ENCODE measurements at regions of chr16 and their contacts with region 1.

Region 1: GRCh38 chr16:87713451-87714229 is 52.1 kb downstream of the KLHDC4 start:
- DNase-seq: peak; percentile 43 to 83 (median 59)
- ATAC-seq: peak; percentile 97
- H3K4me3 ChIP-seq: no peak overlapping the region
- H3K4me3 Mint-ChIP-seq: peak overlapping the region; percentile 59
- H3K27ac ChIP-seq: peak overlapping the region; percentile 3 to 56
- H3K27ac Mint-ChIP-seq: peak overlapping the region; percentile 83
- H3K4me1 ChIP-seq: peaks cover 36% of the 10 kb centered on the region
- H3K4me1 Mint-ChIP-seq: peaks cover 38% of the 10 kb centered on the region
- H3K27me3 ChIP-seq: no peaks in the 10 kb centered on the region
- H3K27me3 Mint-ChIP-seq: no peaks in the 10 kb centered on the region
- CTCF ChIP-seq: no peak

Region 2: GRCh38 chr16:86078121-86078600 is 1635.5 kb before region 1 on chr16:
- CTCF ChIA-PET with region 1: no interaction called
- POLR2A ChIA-PET with region 1: no interaction called
- intact Hi-C with region 1: no loop called
- DNase-seq: peak in 1 of 14 experiments; percentile 12
- ATAC-seq: no peak
- H3K4me3 ChIP-seq: no peak overlapping the region
- H3K4me3 Mint-ChIP-seq: no peak overlapping the region
- H3K27ac ChIP-seq: no peak overlapping the region
- H3K27ac Mint-ChIP-seq: no peak overlapping the region
- H3K4me1 ChIP-seq: no peaks in the 10 kb centered on the region
- H3K4me1 Mint-ChIP-seq: no peaks in the 10 kb centered on the region
- H3K27me3 ChIP-seq: peaks cover 0 to 7% of the 10 kb centered on the region in 2 experiments
- H3K27me3 Mint-ChIP-seq: peaks cover 12% of the 10 kb centered on the region
- CTCF ChIP-seq: no peak

Region 3: DNA sequence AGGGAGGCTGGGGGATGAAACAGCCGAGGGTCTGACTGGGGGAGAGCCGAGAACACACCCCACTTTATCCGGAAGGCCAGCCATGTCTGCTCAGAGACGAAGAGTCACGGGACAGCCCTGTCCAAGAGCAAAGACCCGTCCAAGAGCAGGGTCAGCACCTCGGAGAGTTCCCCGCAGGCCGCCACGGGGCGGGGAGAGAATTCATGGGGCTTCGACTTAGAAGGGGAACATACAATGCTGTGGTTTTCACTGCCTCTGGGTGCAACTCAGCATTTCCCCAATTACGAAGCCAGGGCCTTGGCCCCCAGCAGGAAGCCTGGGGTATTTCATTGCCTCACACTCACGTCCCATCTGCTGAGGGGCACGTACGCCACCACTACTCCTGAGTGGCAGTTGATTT is 52.1 kb before region 1 on chr16:
- CTCF ChIA-PET with region 1: no interaction called
- POLR2A ChIA-PET with region 1: no interaction called
- intact Hi-C with region 1: no loop called
- DNase-seq: peak in 6 of 14 experiments; percentile 4 to 41 (median 20)
- ATAC-seq: peak; percentile 26
- H3K4me3 ChIP-seq: no peak overlapping the region
- H3K4me3 Mint-ChIP-seq: no peak overlapping the region
- H3K27ac ChIP-seq: no peak overlapping the region
- H3K27ac Mint-ChIP-seq: no peak overlapping the region
- H3K4me1 ChIP-seq: no peaks in the 10 kb centered on the region
- H3K4me1 Mint-ChIP-seq: no peaks in the 10 kb centered on the region
- H3K27me3 ChIP-seq: no peaks in the 10 kb centered on the region
- H3K27me3 Mint-ChIP-seq: peaks cover 22% of the 10 kb centered on the region
- CTCF ChIP-seq: no peak

Region 4: GRCh38 chr16:87702325-87702811 is 11.3 kb before region 1 on chr16:
- CTCF ChIA-PET with region 1: no interaction called
- POLR2A ChIA-PET with region 1: interaction called, 11 read pairs
- intact Hi-C with region 1: no loop called
- DNase-seq: peak in 11 of 14 experiments; percentile 15 to 64 (median 40)
- ATAC-seq: peak; percentile 60
- H3K4me3 ChIP-seq: no peak overlapping the region
- H3K4me3 Mint-ChIP-seq: peak overlapping the region; percentile 74
- H3K27ac ChIP-seq: peak overlapping the region; percentile 40 to 41
- H3K27ac Mint-ChIP-seq: peak overlapping the region; percentile 85
- H3K4me1 ChIP-seq: peaks cover 53% of the 10 kb centered on the region
- H3K4me1 Mint-ChIP-seq: peaks cover 54% of the 10 kb centered on the region
- H3K27me3 ChIP-seq: no peaks in the 10 kb centered on the region
- H3K27me3 Mint-ChIP-seq: no peaks in the 10 kb centered on the region
- CTCF ChIP-seq: peak; percentile 35

Measured in CD4-positive, alpha-beta T cell (primary cell).